ENCODE measurements at regions of chr5 and their contacts with region 1.

Region 1: DNA sequence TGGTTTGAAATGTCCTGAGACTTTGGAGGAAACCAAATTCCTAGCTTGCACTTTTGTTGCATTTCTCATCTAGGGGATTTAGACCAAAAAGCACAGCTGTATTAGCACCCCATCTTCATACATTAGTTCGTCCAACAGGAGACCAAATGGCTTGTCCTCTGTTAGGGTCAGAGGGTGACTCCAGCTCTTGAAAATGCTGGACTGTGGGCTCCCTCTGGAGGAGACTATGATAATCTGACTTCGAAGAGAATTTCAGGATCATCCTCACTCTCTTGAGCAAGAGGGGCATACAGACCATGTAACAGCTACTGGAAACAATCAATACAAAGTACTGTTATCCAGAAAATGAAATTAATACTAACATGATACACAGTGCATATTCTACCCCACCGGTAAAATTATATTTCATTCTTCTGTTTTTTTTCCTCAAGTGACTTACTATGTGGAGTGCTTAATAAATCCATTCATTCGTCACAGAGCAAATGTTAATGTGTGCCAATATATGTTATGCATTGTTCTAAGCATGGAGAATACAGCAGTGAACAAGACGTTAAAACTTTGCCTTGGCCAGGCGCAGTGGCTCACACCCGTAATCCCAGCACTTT is 63.7 kb upstream of the PPP2CA start:
- DNase-seq: peak; percentile 65
- H3K4me3 ChIP-seq: no peak overlapping the region
- H3K27ac ChIP-seq: no peak overlapping the region
- H3K27me3 ChIP-seq: peaks cover 5% of the 10 kb centered on the region
- CTCF ChIP-seq: peak; percentile 78

Region 2: GRCh38 chr5:134195666-134196065 is 93.9 kb before region 1 on chr5:
- CTCF ChIA-PET with region 1: interaction called, 249 read pairs
- POLR2A ChIA-PET with region 1: interaction called, 3 read pairs
- DNase-seq: no peak
- H3K4me3 ChIP-seq: no peak overlapping the region
- H3K27ac ChIP-seq: no peak overlapping the region
- H3K27me3 ChIP-seq: no peaks in the 10 kb centered on the region
- CTCF ChIP-seq: no peak

Region 3: GRCh38 chr5:134370871-134371833 is 81.5 kb after region 1 on chr5 and contains the start of gene UBE2B:
- CTCF ChIA-PET with region 1: no interaction called
- POLR2A ChIA-PET with region 1: no interaction called
- DNase-seq: peak; percentile 100
- H3K4me3 ChIP-seq: peak within 1 kb of the TSS; percentile 96
- H3K27ac ChIP-seq: peak within 1 kb of the TSS; percentile 99
- H3K27me3 ChIP-seq: no peaks in the 10 kb centered on the region
- CTCF ChIP-seq: no peak
- polyA plus RNA-seq, gene UBE2B: 57.3 and 99.2 TPM in 2 replicates

Measured in AG04450 (cell line).